GM10248 (cell line): ENCODE measurements at regions of chr6 and their contacts with region 1.

Region 1: GRCh38 chr6:159110013-159110412 is 59.2 kb upstream of the FNDC1 start:
- DNase-seq: no peak
- CTCF ChIP-seq: peak; percentile 59

Region 2: GRCh38 chr6:159008656-159009288 is 101.2 kb before region 1 on chr6:
- CTCF ChIA-PET with region 1: interaction called, 208 read pairs
- POLR2A ChIA-PET with region 1: no interaction called
- DNase-seq: peak; percentile 61
- CTCF ChIP-seq: peak; percentile 59

Region 3: GRCh38 chr6:159042003-159042825 is 67.8 kb before region 1 on chr6:
- CTCF ChIA-PET with region 1: interaction called, 198 read pairs
- POLR2A ChIA-PET with region 1: no interaction called
- DNase-seq: peak; percentile 62
- CTCF ChIP-seq: peak; percentile 98

Region 4: DNA sequence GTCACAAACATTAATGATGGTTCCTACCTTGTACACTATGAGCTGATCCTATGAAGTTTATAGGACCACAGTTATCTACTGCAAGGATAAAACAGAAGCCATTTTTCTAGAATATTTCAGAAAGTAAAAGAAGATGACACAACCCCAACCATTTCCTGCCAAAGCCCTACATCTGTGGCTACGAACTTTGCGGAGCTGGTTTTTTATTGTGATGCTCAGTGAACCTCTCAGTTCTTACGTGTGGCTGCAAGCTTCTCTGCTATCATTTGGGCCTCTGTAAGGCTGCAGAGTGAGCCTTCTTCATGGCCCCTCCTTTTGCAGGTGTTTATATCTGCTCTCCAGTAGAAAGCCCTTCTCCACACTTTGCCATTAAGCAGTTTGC is 47.5 kb before region 1 on chr6:
- CTCF ChIA-PET with region 1: interaction called, 28 read pairs
- POLR2A ChIA-PET with region 1: no interaction called
- DNase-seq: peak; percentile 30
- CTCF ChIP-seq: no peak

Region 5: GRCh38 chr6:159090530-159091480 is 19.2 kb before region 1 on chr6:
- CTCF ChIA-PET with region 1: interaction called, 101 read pairs
- POLR2A ChIA-PET with region 1: no interaction called
- DNase-seq: no peak
- CTCF ChIP-seq: no peak

Region 6: DNA sequence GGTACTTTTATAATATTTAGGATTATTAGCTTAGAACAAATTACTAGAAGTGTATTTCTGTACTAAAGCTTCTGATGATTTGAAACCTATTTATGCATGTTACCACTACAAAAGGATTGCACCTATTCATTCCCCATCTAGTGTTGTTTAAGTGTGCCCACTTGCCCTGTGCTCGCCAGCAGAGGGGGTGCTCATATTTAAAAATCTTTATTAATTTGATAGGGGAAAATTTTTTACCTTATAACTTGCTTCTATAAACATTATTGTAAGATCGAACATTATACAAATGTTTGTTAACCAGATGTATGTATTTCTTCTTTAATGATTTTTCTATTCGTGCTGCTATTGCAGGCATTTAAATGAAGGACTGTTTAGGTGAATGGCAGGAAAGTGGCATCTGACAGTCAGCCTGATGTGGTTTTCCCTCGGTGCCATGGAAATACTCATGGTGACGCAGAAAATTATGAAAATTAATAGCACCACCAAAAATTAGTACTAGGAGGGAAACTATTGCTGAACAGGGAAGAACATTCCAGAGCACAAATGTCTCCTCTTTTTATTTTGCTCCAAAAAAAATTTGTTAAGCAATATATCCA is 15.1 kb after region 1 on chr6:
- CTCF ChIA-PET with region 1: interaction called, 41 read pairs
- POLR2A ChIA-PET with region 1: no interaction called
- DNase-seq: no peak
- CTCF ChIP-seq: no peak

Region 7: GRCh38 chr6:159233365-159234101 is 123.5 kb after region 1 on chr6:
- CTCF ChIA-PET with region 1: no interaction called
- POLR2A ChIA-PET with region 1: no interaction called
- DNase-seq: no peak
- CTCF ChIP-seq: no peak